GM23248 (cell line): ENCODE measurements at regions of chr5 and their contacts with region 1.

Region 1: DNA sequence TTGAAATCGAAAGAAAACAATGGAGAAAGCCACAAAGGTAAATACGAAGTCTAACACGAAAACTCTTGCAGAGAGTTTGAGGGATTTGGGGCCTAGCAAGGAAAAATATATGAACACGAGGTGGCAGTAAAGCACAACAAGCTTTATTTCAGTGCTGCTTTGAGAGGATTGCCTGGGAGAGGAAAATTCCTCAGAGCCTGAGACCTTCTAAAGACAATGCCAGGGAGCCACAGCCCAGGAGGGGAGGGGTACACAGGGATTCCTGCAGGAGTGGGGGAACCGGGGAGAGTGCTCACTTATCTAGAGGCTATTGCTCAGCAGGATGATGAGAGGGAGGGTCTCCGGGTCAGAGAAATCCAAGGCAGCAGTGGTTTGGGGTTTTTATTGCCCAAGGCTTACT is 134.9 kb upstream of the ADCY2 start:
- DNase-seq: peak; percentile 72
- H3K4me3 ChIP-seq: no peak overlapping the region
- H3K27ac ChIP-seq: no peak overlapping the region
- H3K4me1 ChIP-seq: no peaks in the 10 kb centered on the region
- H3K27me3 ChIP-seq: no peaks in the 10 kb centered on the region

Region 2: DNA sequence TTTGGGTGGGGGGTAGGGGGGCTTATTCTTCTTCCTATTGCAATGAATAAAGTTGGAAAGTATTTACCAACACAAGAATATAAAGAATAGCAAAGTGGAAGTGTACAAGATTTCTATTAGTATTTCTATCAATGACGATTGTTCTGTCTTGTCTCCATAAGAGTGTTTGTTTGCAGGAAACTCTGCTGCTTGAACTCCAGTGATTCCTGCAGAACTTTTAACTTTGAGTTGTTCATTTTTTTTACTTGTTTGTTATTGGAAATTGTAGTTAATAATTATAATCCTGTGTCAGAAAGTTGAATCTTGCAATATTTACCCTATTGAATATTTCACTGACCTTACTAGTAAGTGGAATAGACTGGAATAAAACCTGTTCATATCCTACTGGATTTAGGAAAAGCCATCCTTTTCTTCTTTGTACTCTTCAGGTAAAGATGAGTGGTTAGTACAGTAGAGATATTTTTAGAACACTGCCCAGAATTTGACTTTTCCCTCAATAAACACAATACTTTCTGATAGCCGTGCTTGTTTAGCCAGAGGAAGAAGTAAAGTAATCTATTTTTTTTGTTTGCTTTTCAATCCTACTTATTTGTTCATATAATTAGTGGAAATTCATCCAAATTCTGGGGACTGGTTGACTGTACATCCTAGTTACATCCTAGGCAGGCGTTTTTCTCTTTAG is 207.4 kb before region 1 on chr5:
- in situ Hi-C with region 1: no loop called
- DNase-seq: no peak
- H3K4me3 ChIP-seq: no peak overlapping the region
- H3K27ac ChIP-seq: no peak overlapping the region
- H3K4me1 ChIP-seq: no peaks in the 10 kb centered on the region
- H3K27me3 ChIP-seq: no peaks in the 10 kb centered on the region

Region 3: GRCh38 chr5:7391814-7392692 is 131.0 kb after region 1 on chr5:
- in situ Hi-C with region 1: loop called (anchors 25 kb)
- DNase-seq: peak; percentile 75
- H3K4me3 ChIP-seq: no peak overlapping the region
- H3K27ac ChIP-seq: no peak overlapping the region
- H3K4me1 ChIP-seq: no peaks in the 10 kb centered on the region
- H3K27me3 ChIP-seq: peaks cover 3% of the 10 kb centered on the region; the same call in 1 of the 2 replicates

Region 4: DNA sequence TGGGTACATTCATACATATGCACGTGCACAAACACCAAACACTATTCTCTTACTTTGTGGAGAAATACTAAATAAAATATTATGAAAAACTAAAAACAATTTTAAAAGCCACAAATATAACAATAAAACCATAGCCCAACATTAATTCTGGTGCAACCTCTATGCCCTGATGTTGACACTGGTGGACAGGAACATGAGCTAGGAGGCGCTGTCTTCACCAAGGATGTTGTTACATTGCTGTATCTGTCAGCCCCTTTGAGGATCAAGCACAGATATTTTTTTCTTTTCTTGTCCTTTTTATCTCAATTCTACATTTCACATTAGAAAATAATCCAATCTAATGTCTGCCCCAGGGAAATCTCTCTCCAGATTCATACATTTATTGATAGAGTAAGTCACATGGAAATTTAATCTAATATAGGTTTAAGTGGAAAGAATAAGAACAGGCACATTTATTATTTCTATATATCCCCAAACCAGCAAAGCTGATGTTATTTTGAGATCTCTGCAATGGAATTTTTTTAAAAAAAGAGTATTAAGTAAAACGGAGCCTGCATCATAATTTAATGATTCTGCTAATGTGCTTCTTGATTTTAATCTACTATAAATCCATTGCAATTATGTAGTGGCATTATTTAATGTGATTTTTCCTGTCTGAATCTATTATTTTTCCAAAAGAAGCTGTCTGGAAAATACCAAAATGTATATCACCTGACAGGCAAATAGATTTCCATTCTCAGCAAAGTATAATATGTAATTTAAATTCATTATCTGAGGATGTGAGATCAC is 1324.4 kb after region 1 on chr5:
- in situ Hi-C with region 1: no loop called
- DNase-seq: peak; percentile 8
- H3K4me3 ChIP-seq: no peak overlapping the region
- H3K27ac ChIP-seq: no peak overlapping the region
- H3K4me1 ChIP-seq: no peaks in the 10 kb centered on the region
- H3K27me3 ChIP-seq: no peaks in the 10 kb centered on the region; the same call in 1 of the 2 replicates